ENCODE measurements at regions of chr10 and their contacts with region 1.

Region 1: GRCh38 chr10:97676770-97677581 is 10.1 kb downstream of the AVPI1 start:
- DNase-seq: no peak
- H3K4me3 ChIP-seq: no peak overlapping the region
- CTCF ChIP-seq: peak; percentile 81

Region 2: GRCh38 chr10:97651773-97652172 is 25.2 kb before region 1 on chr10:
- CTCF ChIA-PET with region 1: interaction called, 15 read pairs
- POLR2A ChIA-PET with region 1: no interaction called
- DNase-seq: no peak
- H3K4me3 ChIP-seq: no peak overlapping the region
- CTCF ChIP-seq: no peak

Region 3: DNA sequence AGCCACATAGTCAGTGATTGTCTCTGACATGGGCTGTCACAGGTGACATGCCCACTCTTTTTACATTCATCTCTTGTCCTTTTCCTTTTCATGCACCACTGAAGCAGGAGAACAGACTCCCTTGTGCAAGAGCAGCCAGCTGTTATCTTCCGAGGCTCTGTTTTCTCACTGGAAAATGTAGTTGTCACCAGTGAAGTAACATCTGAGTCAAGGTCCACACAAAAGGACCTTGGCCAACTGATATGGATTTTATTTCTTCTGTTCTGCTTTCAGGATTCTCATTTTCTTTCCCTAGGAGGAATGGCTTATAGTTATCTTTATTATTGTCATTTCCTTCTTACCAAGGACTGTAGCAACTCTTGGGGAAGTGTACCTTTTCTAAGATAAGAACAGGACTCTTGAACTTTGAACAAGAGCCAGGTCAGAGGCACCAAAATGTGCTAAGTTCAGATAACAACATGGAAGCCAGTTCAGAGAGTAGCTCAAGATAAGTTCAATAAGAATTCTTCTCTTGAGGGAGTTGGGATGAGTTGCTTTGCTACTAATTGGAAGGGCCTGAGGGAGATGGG is 12.6 kb before region 1 on chr10:
- CTCF ChIA-PET with region 1: interaction called, 94 read pairs
- POLR2A ChIA-PET with region 1: no interaction called
- DNase-seq: no peak
- H3K4me3 ChIP-seq: no peak overlapping the region
- CTCF ChIP-seq: no peak

Region 4: DNA sequence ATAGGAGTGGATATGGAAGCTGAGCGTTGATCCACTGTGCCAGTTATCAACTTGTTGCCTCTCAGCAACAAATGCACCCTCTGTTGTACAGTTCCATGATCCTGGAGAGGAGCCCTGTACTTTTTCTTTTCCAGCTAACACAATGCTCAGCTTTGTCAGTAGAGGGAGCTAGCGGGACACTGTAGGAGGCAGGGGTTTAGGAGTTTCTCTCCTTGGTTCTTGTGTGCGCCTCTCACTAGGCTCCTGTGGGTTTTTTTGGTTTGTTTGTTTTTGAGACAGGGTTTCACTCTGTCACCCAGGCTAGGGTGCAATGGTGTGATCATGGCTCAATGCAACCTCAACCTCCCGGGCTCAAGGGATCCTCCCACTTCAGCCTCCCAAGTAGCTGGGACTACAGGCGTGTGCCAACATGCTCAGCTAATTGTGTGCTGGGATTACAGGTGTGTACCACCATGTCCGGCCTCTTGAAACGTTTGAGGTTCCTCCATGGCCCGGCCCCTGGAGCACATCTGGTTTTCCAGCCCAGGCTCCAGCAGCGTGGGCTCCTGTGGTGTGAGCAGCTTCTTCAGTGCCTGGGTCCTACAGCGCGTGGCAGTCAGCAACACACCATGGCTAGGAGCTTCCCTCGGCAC is 24.6 kb after region 1 on chr10:
- CTCF ChIA-PET with region 1: interaction called, 305 read pairs
- POLR2A ChIA-PET with region 1: interaction called, 3 read pairs
- DNase-seq: no peak
- H3K4me3 ChIP-seq: no peak overlapping the region
- CTCF ChIP-seq: peak; percentile 86

Region 5: GRCh38 chr10:97736902-97737769 is 60.2 kb after region 1 on chr10 and contains the start of gene ZFYVE27:
- CTCF ChIA-PET with region 1: interaction called, 328 read pairs
- POLR2A ChIA-PET with region 1: no interaction called
- DNase-seq: no peak
- H3K4me3 ChIP-seq: peak within 1 kb of the TSS; percentile 97
- CTCF ChIP-seq: no peak